ENCODE measurements at regions of chr5 and their contacts with region 1.

Region 1: DNA sequence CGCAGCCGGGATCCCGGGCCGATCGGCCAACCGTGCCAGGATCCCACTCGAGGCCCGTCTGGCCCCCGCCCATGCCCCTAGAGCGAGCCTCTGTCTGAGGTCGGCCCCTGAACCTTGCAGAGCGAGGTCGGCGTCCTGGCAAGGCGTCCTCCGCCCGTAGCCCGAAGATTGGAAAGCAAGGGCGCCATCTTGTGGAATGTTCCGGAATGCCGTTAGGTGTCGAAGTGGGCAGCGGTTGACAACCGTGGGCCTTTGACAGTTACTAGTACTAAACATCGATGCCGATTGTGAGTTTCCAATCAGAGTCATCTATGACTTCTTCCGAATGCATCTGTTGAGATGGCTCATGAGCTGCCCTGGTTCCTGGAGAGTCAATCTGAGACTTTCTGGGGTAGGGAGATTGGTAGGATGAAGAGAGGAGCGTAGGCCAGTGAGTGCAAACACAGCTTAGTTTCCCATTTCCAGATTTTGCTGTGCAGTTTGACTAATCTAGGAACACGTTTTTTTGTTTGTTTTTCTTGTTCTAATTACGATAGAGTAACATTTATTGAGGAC is 923 bp upstream of the PLK2 start:
- DNase-seq: peak; percentile 94
- ATAC-seq: peak; percentile 84

Region 2: DNA sequence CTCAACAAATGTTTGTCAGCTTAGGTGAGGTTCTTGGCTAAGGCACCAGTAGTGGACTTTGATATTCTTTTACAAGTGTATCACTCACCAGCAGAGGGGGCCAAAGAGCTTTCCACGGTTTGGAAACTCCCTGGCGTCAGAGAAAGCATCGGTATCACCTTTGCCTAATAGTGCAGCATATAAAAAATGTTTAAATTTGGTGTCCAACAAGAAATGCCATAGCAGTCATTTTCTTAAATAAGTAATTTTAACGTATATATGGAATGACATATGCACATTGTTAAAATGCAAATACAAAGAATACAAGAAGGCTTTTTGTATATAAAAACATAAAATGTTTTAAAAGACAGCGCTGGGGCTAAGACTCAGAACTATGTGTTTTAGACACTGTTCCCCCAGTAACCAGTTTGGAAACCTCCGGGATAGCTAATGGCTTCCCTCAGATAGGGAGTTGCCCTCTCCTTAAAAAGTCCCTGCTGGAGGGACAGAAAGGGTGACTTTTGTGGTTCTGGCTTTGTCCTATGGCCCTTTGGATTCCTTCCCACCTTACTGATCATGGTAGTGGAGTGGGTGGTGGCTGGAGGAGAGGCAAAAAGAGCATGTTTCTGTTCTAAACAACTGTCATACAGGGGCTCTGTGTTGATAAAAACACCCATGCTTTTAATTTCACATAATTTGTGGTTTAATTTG is 1162.4 kb before region 1 on chr5:
- intact Hi-C with region 1: loop called (anchors 2 kb)
- DNase-seq: peak; percentile 51
- ATAC-seq: peak; percentile 94

Region 3: GRCh38 chr5:57779383-57780223 is 681.2 kb before region 1 on chr5:
- intact Hi-C with region 1: loop called (anchors 2 kb)
- DNase-seq: no peak
- ATAC-seq: peak; percentile 87

Region 4: DNA sequence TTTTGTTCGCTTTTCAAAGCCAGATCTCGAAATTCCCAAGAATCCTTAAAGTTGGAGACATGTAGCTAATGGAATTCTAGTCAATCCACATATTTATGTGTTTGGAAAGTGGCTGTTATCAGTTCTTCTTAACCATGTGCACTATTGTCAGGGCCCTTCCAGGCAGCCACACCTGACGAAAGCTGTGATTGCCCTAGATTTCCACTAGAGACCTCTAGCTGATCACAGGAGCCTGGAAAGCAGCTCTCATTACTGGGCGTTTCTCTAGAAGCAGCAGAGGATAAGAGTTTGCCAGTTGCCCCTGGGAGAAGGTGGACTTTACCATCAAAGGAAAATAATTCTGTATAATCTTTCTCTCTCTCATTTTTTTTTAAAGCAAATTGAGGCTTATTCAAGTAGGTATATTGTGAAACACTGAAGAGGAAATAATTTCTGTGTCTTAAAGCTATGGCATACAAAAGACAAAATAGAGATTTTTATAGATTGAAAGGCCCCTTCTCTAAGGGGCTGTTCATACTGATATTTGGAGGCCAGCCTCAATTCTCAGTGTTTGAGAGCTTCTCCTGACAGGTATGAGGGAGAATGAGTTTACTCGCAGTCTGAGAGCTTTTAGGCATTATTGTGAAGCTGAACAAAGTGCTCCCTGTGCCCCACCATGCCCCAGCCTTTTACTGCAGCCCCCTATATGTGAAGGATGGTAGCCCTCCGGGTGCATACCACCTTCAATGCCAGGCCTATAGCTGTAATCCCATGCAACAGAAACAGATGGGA is 572.8 kb before region 1 on chr5:
- intact Hi-C with region 1: loop called (anchors 2 kb)
- DNase-seq: no peak
- ATAC-seq: peak; percentile 96

Region 5: GRCh38 chr5:58071566-58071965 is 389.2 kb before region 1 on chr5:
- intact Hi-C with region 1: loop called (anchors 10 kb)
- DNase-seq: peak; percentile 58
- ATAC-seq: peak; percentile 96

Region 6: DNA sequence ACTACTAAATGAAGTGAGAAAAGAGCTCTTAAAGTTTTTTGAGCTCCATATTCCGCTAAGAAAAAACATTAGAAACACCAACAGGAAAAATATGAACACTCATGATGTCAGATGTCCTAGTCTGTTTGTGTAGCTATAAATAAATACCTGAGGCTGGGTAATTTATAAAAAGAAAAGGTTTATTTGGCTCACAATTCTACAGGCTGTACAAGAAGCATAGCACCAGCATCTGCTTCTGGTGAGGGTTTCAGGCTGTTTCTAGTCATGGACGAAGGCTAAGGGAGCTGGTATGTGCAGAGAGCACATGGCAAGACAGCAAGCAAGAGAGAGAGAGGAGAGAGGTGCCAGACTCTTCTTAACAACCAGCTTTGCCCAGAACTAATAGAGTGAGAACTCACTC is 187.1 kb before region 1 on chr5:
- intact Hi-C with region 1: loop called (anchors 10 kb)
- DNase-seq: no peak
- ATAC-seq: no peak

Region 7: DNA sequence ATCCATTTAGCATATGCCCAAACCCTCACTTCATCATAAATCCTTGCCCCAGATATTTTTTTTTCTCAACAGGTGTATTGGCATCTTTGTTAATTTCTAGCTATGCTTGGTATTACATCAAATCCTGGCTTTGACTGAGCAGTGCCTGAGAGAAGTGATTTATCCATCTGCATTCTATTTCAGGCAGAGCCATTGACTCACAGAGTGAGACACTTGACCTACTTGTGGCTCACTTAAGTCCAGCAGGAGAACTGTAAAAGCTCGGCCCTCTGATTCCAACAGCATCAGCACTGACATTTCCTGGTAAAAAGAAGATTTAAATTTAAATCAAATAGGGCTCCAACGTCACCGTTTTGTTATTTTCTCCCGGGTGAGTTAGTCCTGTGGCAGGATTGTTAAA is 94.3 kb before region 1 on chr5:
- intact Hi-C with region 1: loop called (anchors 10 kb)
- DNase-seq: no peak
- ATAC-seq: peak; percentile 75

Region 8: GRCh38 chr5:58517198-58517597 is 56.4 kb after region 1 on chr5:
- intact Hi-C with region 1: no loop called
- DNase-seq: no peak
- ATAC-seq: no peak

Measured in Right ventricle myocardium superior (tissue), 1 donor.